ENCODE measurements at regions of chr7 and their contacts with region 1.

Region 1: DNA sequence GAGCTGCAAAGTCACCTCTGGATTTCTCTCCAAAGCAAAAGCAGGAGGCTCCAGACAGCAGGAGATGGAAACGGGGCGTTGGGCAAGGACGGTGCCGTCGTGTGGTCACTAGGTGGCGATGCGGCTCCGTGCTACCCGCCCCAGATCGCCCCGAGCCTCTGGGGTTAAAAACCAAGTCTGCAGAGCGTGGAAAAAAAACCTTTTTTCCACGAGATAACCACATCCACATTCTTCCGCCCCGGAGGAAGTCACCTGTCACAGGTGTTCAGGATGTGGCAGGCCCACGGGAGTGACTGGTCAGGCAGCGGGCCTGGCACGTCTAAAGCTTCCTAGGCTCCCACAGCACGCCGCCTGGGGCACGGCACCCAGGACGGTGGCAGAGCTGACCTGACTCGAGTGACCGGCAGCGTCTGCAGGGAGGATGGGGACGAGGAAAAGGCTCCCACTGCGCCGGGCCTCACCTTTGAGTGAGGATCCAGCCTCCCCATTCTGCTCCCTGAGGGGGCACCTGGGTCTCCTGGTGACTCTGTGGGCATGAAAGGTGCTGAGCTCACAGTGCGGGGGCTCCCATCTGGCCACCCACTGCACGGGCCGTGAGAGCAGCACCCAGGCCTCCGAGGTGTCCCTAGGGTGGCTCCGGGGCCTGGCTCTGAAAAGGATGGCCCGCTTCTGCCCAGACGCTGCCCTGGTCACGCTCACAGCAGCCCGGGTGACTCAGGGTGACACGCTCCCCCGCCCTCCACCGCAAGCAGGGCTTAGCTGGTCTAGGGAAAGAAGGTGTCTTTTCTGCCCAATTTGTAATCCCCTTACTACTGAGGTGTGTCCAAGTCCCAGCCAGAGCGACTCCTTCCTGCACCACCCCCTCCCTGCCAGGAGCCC is 71.3 kb upstream of the TNRC18 start:
- DNase-seq: peak; percentile 86

Region 2: GRCh38 chr7:5425507-5426225 is 69.3 kb before region 1 on chr7:
- intact Hi-C with region 1: no loop called
- DNase-seq: peak; percentile 86

Region 3: GRCh38 chr7:5541087-5541992 is 46.4 kb after region 1 on chr7:
- intact Hi-C with region 1: no loop called
- DNase-seq: no peak

Region 4: DNA sequence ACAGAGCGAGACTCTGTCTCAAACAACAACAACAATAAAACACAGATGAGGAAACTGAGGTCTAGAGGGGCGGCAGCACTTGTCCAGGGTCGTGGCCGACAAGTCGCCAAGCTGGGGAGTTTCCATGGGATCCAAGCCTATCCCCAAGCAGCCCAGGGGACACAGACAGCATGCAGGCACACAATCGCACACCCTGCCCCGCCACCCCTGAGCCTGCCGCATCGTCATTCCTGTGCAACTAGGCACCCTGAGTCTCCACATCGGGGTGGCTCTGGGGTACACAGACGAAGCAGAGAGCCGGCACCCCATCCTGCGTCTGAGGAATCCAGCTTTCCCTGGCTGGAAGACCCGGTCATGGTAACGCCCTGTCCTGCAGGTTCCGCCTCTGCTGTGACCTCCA is 64.7 kb after region 1 on chr7:
- intact Hi-C with region 1: loop called (anchors 1 kb)
- DNase-seq: no peak

Region 5: GRCh38 chr7:5580714-5581395 is 85.9 kb after region 1 on chr7:
- intact Hi-C with region 1: no loop called
- DNase-seq: no peak

Region 6: GRCh38 chr7:5665094-5666025 is 170.4 kb after region 1 on chr7:
- intact Hi-C with region 1: loop called (anchors 2 kb)
- DNase-seq: no peak

Region 7: GRCh38 chr7:5704534-5704922 is 209.6 kb after region 1 on chr7:
- intact Hi-C with region 1: loop called (anchors 2 kb)
- DNase-seq: peak; percentile 83

Measured in cardiac septum (tissue), 1 donor.